GM12878 (cell line): ENCODE measurements at regions of chr1 and their contacts with region 1.

Region 1: DNA sequence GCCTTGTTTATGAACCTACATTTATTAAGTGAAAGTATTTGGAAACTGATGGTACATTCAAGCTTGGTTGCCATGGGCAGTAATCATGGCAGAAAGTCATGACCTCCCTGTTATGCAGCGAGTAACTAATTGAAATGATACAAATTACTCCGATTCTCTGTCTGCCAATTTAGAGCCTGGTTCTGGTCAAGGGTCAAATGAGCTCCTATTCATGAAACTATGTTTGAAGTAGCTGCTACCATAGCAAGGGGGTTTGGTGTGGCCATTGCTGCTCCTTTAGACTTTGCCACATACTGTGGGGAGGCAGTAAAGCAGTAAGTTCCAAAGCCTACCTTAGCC is 187.2 kb upstream of the FOXD3 start:
- DNase-seq: no peak
- ATAC-seq: no peak
- H3K4me3 ChIP-seq: no peak overlapping the region
- H3K27ac ChIP-seq: no peak overlapping the region
- H3K4me1 ChIP-seq: no peaks in the 10 kb centered on the region
- H3K27me3 ChIP-seq: peaks cover 0 to 11% of the 10 kb centered on the region in 2 experiments; a peak in 1 of 4 replicates
- CTCF ChIP-seq: no peak
- EP300 ChIP-seq: no peak
- POLR2A ChIP-seq: no peak
- RAD21 ChIP-seq: no peak

Region 2: DNA sequence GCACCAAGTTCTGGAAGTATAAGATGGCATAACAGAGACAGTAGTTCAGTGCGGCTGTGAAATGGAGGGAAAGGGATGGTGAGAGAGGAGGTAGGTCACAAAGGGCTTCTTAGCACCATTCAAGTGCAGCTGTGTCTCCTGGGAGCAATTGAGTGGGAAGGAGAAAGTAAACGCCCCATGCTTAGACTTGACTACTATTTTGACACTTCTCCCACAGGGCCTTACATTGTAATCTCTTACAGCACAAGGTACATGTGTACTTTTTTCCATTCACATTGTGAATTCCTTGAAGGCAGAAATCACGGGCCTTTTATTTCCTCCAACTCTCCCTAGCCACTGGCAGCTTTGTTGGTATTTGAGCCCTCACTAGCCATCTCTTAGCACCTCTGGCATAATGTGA is 52.4 kb before region 1 on chr1:
- CTCF ChIA-PET with region 1: no interaction called
- POLR2A ChIA-PET with region 1: no interaction called
- RAD21 ChIA-PET with region 1: no interaction called
- SMC1A ChIA-PET with region 1: no interaction called
- in situ Hi-C with region 1: no loop called
- intact Hi-C with region 1: loop called (anchors 5 kb)
- DNase-seq: no peak
- ATAC-seq: no peak
- H3K4me3 ChIP-seq: no peak overlapping the region
- H3K27ac ChIP-seq: no peak overlapping the region
- H3K4me1 ChIP-seq: no peaks in the 10 kb centered on the region
- H3K27me3 ChIP-seq: peaks cover 2% of the 10 kb centered on the region in 2 experiments; a peak in 3 of 4 replicates
- CTCF ChIP-seq: no peak
- EP300 ChIP-seq: no peak
- POLR2A ChIP-seq: no peak
- RAD21 ChIP-seq: no peak

Region 3: GRCh38 chr1:63198871-63199394 is 63.8 kb after region 1 on chr1:
- CTCF ChIA-PET with region 1: no interaction called
- POLR2A ChIA-PET with region 1: no interaction called
- RAD21 ChIA-PET with region 1: no interaction called
- SMC1A ChIA-PET with region 1: no interaction called
- in situ Hi-C with region 1: no loop called
- intact Hi-C with region 1: no loop called
- DNase-seq: no peak
- ATAC-seq: no peak
- H3K4me3 ChIP-seq: no peak overlapping the region
- H3K27ac ChIP-seq: no peak overlapping the region
- H3K4me1 ChIP-seq: no peaks in the 10 kb centered on the region
- H3K27me3 ChIP-seq: peaks cover 0 to 3% of the 10 kb centered on the region in 2 experiments; a peak in 2 of 4 replicates
- CTCF ChIP-seq: no peak
- EP300 ChIP-seq: no peak
- POLR2A ChIP-seq: no peak
- RAD21 ChIP-seq: no peak